ENCODE measurements at regions of chr17 and their contacts with region 1.

Region 1: DNA sequence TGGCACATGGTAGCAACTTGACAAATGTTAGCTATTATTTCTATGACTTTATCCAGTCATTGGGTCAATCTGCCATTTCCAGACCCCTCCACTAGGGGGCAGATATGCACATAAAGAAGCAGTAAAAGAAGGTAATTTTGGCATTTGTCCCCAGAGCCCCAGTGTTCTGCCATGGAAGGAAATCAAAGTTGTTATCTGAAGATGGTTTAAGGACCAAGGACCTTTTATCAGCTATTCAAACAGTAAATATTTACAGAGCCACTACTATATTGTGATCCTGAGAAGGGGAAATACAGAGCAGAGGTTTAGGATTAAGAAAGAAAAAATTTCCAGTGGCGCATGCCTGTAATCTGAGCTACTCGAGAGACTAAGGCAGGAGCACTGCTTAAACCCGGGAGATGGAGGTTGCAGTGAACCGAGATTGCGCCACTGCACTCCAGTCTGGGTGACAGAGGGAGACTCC is 20.0 kb downstream of the TRAF4 start:
- DNase-seq: no peak
- H3K4me3 ChIP-seq: no peak overlapping the region
- H3K27ac ChIP-seq: no peak overlapping the region
- H3K4me1 ChIP-seq: peaks cover 12 to 39% (median 27%) of the 10 kb centered on the region in 6 donors
- H3K27me3 ChIP-seq: no peaks in the 10 kb centered on the region
- CTCF ChIP-seq: peak; percentile 82 to 94 (median 89)
- POLR2A ChIP-seq: no peak

Region 2: GRCh38 chr17:28644985-28645939 is 118.6 kb before region 1 on chr17 and contains the start of gene BLTP2:
- intact Hi-C with region 1: no loop called
- DNase-seq: peak; percentile 100
- H3K4me3 ChIP-seq: peak within 1 kb of the TSS; percentile 68 to 97 (median 90)
- H3K27ac ChIP-seq: peak within 1 kb of the TSS; percentile 93 to 99 (median 96)
- H3K4me1 ChIP-seq: peaks cover 31 to 72% (median 52%) of the 10 kb centered on the region in 6 donors
- H3K27me3 ChIP-seq: no peaks in the 10 kb centered on the region
- CTCF ChIP-seq: peak in 7 of 11 experiments; percentile 6 to 31 (median 16)
- POLR2A ChIP-seq: peak; percentile 53 to 72 (median 66)
- total RNA-seq, gene BLTP2: 143 to 193 (median 149) TPM

Region 3: GRCh38 chr17:28812091-28812747 is 48.4 kb after region 1 on chr17:
- intact Hi-C with region 1: loop called (anchors 10 kb)
- DNase-seq: peak; percentile 99
- H3K4me3 ChIP-seq: peak overlapping the region; percentile 74 to 99 (median 86)
- H3K27ac ChIP-seq: peak overlapping the region; percentile 70 to 93 (median 87)
- H3K4me1 ChIP-seq: peaks cover 10 to 55% (median 37%) of the 10 kb centered on the region in 6 donors
- H3K27me3 ChIP-seq: no peaks in the 10 kb centered on the region
- CTCF ChIP-seq: peak in 1 of 11 experiments; percentile 14
- POLR2A ChIP-seq: no peak

Region 4: DNA sequence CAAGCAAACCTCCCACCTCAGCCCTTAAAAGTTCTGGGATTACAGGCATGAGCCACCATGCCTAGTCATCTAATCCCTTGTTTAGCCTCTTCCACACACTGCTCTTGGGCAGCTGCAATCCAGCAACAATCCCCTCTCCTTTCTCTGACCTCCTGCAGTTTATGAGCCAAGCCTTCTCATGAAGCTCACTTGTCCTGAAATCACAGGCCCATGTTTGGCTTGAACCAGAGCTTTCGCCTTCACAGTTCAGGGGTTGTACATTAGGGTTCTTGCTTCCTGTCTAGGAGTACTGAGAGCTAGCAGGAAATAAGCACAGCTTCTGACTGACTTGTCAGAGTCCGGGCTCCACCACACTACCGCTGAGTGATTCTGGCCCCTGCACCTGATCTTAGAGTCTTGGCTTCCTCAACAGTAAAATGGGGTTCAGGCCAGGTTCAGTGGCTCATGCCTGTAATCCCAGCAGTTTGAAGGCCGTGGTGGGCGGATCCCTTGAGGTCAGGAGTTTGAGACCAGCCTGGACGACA is 107.3 kb after region 1 on chr17:
- intact Hi-C with region 1: no loop called
- DNase-seq: peak; percentile 84
- H3K4me3 ChIP-seq: no peak overlapping the region
- H3K27ac ChIP-seq: peak overlapping the region; percentile 10 to 82 (median 68)
- H3K4me1 ChIP-seq: peaks cover 0 to 25% (median 11%) of the 10 kb centered on the region in 6 donors
- H3K27me3 ChIP-seq: no peaks in the 10 kb centered on the region
- CTCF ChIP-seq: no peak
- POLR2A ChIP-seq: no peak

Region 5: DNA sequence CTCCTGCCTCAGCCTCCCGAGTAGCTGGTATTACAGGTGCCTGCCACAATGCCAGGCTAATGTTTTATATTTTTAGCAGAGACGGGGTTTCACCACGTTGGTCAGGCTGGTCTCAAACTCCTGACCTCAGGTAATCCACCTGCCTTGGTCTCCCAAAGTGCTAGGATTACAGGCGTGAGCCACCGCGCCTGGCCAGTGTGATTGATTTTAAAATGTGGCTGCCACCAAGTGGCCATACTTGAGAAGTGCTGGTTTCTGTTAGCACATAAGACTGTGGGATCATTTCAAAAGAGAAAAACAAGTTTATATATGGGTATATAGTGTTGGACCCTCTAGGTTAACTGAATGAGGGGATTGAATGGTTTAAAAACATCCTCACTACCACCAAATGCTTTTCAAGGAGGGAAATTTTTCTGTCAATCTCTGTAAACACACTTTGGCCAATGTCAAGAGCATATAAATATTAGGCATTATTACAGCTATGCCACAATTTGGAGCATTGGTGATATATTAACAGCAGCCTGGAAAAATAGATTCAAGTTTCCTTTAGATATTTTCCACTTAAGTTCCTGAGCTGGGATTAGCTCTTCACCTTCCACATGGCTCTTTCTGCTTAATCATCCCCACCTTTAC is 152.6 kb after region 1 on chr17:
- intact Hi-C with region 1: loop called (anchors 10 kb)
- DNase-seq: no peak
- H3K4me3 ChIP-seq: no peak overlapping the region
- H3K27ac ChIP-seq: peak overlapping the region in 2 of 8 donors; percentile 44 to 56
- H3K4me1 ChIP-seq: peaks cover 0 to 18% (median 3%) of the 10 kb centered on the region in 6 donors
- H3K27me3 ChIP-seq: no peaks in the 10 kb centered on the region
- CTCF ChIP-seq: peak; percentile 40 to 83 (median 72)
- POLR2A ChIP-seq: no peak